ENCODE measurements at regions of chr1 and their contacts with region 1.

Region 1: DNA sequence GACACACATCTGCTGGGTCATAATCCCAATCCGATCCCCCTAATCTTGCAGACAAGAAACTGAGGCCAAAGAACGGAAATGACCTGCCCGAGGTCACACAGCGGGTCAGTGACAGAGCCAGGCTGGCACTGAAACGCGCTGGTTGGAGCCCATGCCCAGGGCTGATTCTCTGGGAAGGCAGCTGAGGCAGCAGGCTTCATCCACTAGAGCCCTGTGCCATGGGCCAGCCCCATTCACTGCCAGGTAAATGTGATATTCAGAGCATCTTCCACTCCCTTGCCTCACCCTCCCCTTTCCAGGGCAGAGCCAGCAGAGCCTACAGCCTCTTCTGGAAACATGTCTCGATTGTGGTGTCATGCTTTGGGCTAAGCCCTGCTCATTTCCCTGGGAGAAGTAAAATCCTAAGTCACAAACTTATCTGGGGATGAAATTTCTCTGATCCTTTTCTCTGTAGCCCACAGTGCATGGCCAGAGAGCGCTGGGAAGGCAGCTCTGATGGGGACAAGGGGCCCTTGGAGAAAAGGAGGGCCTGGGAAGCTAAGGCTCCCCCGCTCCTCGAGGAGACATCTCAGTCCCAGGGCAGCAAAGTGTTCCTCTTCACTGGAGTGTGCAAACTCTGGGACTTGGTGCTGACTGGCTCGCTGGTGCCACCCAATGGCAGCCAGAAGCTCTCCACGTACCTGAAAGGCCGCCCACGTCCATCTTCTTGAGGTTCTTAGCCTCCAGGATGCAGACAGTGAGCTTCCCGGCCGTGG is 110.4 kb downstream of the SYT2 start:
- DNase-seq: peak; percentile 41 to 54 (median 48)
- ATAC-seq: peak; percentile 70
- H3K4me3 ChIP-seq: no peak overlapping the region
- H3K27ac ChIP-seq: no peak overlapping the region
- H3K4me1 ChIP-seq: no peaks in the 10 kb centered on the region
- H3K27me3 ChIP-seq: no peaks in the 10 kb centered on the region
- CTCF ChIP-seq: peak; percentile 31 to 64 (median 56)
- POLR2A ChIP-seq: no peak

Region 2: DNA sequence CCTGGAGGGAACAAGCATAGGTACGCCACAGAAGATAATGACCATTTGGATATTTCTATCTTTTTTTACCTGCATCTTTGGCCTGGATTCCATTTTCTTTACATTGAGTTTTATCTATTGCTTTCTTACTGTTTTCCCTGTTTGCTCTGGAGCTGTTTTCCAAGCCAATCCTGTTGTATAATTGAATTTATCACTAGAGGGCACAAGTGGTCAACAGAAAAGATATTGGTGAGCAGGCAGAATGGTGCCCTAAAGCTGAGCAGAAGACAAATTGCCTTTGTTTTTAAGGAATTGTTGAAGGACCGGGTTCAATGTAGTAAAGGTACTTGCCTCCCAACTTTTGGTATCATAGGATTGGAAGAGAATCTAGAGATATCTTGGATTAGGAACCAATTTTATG is 98.6 kb before region 1 on chr1:
- intact Hi-C with region 1: loop called (anchors 10 kb)
- DNase-seq: peak in 1 of 4 donors; percentile 10
- ATAC-seq: peak; percentile 64
- H3K4me3 ChIP-seq: no peak overlapping the region
- H3K27ac ChIP-seq: no peak overlapping the region
- H3K4me1 ChIP-seq: peaks cover 14% of the 10 kb centered on the region
- H3K27me3 ChIP-seq: no peaks in the 10 kb centered on the region
- CTCF ChIP-seq: peak in 6 of 7 experiments; percentile 18 to 62 (median 58)
- POLR2A ChIP-seq: no peak

Region 3: DNA sequence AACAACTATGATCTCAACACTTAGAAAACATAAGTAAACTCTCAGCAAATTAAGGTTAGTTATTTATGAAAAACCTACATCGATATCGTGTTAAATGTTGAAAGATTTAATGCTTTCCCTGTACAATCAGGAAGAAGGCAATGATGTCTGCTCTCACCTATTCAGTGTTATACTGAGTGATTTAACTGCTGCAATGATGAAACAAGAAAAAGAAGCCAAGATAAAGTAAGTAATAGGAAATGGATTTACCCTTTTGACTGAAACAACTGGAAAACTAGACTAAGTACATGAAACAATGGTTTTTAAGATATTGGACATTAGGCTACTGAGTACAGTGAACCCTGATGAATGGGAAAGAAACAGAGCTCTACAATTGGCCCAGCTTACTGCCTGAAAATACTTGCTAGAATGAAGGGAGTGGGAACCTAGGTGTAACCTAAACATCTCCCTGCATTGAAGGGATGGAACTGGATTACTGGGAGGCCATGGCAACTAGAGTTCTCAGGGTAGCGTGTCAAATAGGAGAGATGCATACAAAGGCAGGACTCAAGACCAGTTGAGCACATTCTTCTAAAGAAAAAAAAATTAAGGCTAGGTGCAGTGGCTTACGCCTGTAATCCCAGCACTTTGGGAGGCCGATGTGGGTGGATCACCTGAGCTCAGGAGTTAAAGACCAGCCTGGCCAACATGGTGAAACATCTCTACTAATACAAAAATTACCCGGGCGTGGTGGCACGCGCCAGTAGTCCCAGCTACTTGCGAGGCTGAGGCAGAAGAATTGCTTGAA is 1298.8 kb after region 1 on chr1:
- intact Hi-C with region 1: no loop called
- DNase-seq: no peak
- ATAC-seq: no peak
- H3K4me3 ChIP-seq: no peak overlapping the region
- H3K27ac ChIP-seq: peak overlapping the region in 3 of 4 donors; percentile 6 to 47 (median 34)
- H3K4me1 ChIP-seq: peaks cover 14% of the 10 kb centered on the region
- H3K27me3 ChIP-seq: no peaks in the 10 kb centered on the region
- CTCF ChIP-seq: no peak
- POLR2A ChIP-seq: no peak